PC-9 (cell line): ENCODE measurements at regions of chr14 and their contacts with region 1.

Region 1: GRCh38 chr14:50830932-50831725 is at the start of gene NIN:
- DNase-seq: peak; percentile 48 to 79
- H3K4me3 ChIP-seq: peak within 1 kb of the TSS; percentile 88
- H3K27ac ChIP-seq: no peak within 1 kb of the TSS
- H3K4me1 ChIP-seq: 0 out of 2 replicates have a peak, but pooled peaks cover 8% of the 10 kb centered on the region
- H3K27me3 ChIP-seq: no peaks in the 10 kb centered on the region
- CTCF ChIP-seq: no peak
- total RNA-seq, gene NIN: 34.3 and 36.5 TPM in 2 replicates

Region 2: DNA sequence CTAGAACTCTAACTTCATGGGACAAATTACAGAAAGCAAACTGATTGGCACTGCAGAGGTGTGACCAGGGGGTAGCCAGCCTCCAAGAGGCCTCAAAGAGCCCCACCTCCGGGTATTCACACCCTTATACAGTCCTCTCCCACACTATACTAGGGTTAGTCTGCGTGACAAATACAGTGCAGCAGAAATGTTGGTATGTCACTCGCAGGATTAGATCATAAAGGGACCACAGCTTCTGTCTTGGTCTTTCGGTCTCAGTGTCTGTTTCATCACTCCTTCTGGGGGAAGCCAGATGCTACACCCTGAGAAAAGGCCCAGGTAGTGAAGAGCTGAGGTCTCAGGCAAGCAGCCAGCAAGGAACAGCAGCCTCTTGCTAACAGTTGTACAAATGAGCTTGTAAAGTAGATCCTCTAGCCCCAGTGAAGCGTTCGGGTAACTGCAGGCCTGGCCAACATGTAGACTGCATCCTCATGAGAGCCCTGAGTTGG is 94.2 kb before region 1 on chr14:
- CTCF ChIA-PET with region 1: interaction called, 10 read pairs
- POLR2A ChIA-PET with region 1: no interaction called
- intact Hi-C with region 1: no loop called
- DNase-seq: no peak
- H3K4me3 ChIP-seq: no peak overlapping the region
- H3K27ac ChIP-seq: no peak overlapping the region
- H3K4me1 ChIP-seq: peaks cover 32% of the 10 kb centered on the region
- H3K27me3 ChIP-seq: no peaks in the 10 kb centered on the region
- CTCF ChIP-seq: no peak

Region 3: GRCh38 chr14:51069055-51069664 is 238.0 kb after region 1 on chr14:
- CTCF ChIA-PET with region 1: no interaction called
- POLR2A ChIA-PET with region 1: no interaction called
- intact Hi-C with region 1: no loop called
- DNase-seq: no peak
- H3K4me3 ChIP-seq: no peak overlapping the region
- H3K27ac ChIP-seq: no peak overlapping the region
- H3K4me1 ChIP-seq: no peaks in the 10 kb centered on the region
- H3K27me3 ChIP-seq: no peaks in the 10 kb centered on the region
- CTCF ChIP-seq: no peak

Region 4: DNA sequence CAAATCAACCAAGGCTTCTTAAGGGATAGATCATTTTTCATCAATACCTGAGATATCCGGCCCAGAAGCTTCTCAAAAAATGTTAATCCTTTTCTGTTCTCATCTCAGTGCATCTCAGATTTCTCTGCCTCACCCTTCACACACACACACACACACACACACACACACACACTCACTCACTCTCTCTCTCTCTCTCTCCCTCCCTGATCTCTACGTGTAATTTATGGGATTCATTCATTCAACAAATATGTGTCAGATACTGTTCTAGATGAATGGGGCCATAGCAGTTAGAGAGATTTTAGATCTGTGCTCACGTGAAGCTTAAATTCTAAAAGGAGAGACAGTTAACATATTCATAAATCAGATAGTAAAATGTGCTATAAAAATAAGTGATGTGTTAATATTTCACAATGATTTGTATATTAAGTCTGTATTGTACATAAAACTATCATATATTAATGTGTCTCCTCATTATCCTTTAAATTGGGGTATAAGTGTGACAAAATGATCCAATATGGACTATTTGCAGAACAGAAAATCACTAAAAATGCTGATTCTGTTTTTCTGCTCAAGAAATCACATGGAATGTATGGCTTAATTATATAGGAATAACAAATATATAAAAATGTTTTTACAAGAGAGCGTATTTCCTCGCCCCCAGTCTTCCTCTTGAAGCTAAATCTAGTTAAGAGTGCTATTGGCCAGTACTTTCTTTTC is 813.2 kb after region 1 on chr14:
- CTCF ChIA-PET with region 1: no interaction called
- POLR2A ChIA-PET with region 1: interaction called, 20 read pairs
- intact Hi-C with region 1: no loop called
- DNase-seq: no peak
- H3K4me3 ChIP-seq: no peak overlapping the region
- H3K27ac ChIP-seq: no peak overlapping the region
- H3K4me1 ChIP-seq: peaks cover 14% of the 10 kb centered on the region
- H3K27me3 ChIP-seq: no peaks in the 10 kb centered on the region
- CTCF ChIP-seq: no peak